Dendritic cell treated with granulocyte-macrophage colony-stimulating factor and Interleukin-4, amounts not matched to agents 40 ng/mL and 50 ng/mL, for 4 days (primary cell): ENCODE measurements at regions of chr10 and their contacts with region 1.

Region 1: GRCh38 chr10:123132576-123133477 is 2.9 kb upstream of the HMX3 start:
- H3K4me3 Mint-ChIP-seq: no peak overlapping the region
- H3K27ac Mint-ChIP-seq: no peak overlapping the region
- H3K4me1 Mint-ChIP-seq: peaks cover 28% of the 10 kb centered on the region
- H3K27me3 Mint-ChIP-seq: peaks cover 90% of the 10 kb centered on the region

Region 2: DNA sequence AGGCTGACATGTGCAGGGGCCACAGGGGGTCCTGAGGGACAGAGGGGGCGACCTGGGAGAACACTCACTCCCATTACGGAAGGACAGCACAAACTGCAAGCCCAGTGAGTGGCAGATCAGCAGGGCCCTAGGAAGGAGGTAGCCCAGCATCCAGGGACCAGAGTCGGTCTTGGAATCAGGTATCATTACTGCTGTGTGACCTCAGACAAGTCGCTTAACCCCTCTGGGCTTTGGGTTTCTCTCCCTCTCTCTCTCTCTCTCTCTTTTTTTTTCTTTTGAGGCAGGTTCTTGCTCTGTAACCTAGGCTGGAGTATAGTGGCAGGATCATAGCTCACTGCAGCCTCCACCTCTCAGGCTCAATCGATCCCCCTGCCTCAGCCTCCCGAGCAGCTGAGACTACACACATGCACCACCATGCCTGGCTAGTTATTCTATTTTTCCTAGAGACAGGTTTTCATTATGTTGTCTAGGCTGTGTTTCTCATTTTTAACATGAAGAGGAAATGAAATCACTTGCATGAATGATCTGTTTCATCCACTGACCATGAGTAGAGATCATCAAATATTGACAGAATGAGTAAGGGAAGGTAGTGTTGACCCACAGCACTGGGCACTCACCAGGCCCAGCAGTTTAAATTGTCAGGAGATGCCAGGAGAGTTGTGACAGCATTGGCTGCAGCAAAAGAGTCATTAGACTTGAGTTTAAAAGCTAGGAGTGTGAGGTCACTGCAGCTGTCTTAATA is 70.7 kb after region 1 on chr10:
- intact Hi-C with region 1: no loop called
- H3K4me3 Mint-ChIP-seq: no peak overlapping the region
- H3K27ac Mint-ChIP-seq: no peak overlapping the region
- H3K4me1 Mint-ChIP-seq: no peaks in the 10 kb centered on the region
- H3K27me3 Mint-ChIP-seq: no peaks in the 10 kb centered on the region

Region 3: DNA sequence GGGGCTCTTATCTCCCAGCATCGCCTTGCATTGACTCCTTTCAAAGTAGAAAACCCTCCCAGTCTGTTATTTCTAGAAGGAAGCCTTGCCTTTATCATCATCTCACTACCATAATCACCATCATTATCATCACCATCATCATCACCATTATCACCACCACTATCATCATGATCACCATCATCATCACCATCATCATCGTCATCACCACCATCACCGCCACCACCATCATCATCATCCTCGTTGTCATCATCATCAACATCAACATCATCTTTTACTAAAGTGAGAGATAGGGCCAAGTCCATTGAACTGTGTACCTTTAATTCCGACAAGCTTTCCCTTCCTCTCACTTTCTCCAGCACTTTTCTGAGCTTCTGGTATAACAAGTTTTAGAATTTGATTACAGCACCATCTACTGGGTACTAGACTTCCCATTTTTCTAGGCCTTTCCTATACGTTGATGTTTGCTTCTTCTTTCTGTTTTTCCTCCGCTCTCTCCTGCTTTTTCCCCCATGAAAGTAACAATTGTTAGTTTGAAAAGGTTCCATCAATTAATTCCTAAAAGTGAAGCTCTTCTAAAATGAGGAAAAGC is 247.8 kb after region 1 on chr10:
- intact Hi-C with region 1: loop called (anchors 2 kb)
- H3K4me3 Mint-ChIP-seq: no peak overlapping the region
- H3K27ac Mint-ChIP-seq: no peak overlapping the region
- H3K4me1 Mint-ChIP-seq: no peaks in the 10 kb centered on the region
- H3K27me3 Mint-ChIP-seq: peaks cover 21% of the 10 kb centered on the region

Region 4: DNA sequence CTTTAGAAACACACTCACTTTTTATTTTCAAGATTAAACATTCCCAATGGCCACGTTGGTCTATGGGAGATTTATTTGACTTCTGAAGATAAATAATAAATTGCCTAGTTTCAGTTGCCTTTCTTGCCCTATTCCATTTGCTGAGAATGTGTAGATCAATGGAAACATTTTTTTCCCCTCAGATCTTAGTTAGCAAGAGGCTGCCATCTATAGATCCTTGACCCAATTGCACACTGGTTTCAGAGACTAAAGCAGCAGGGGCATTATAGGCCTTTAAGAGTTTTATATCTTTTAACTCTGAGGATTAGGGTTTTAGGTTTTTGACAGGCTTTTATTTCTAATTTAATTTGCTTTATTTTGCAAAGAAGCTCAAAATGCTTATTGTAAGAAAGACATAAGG is 370.2 kb after region 1 on chr10:
- intact Hi-C with region 1: loop called (anchors 1 kb)
- H3K4me3 Mint-ChIP-seq: no peak overlapping the region
- H3K27ac Mint-ChIP-seq: no peak overlapping the region
- H3K4me1 Mint-ChIP-seq: no peaks in the 10 kb centered on the region
- H3K27me3 Mint-ChIP-seq: peaks cover 20% of the 10 kb centered on the region

Region 5: GRCh38 chr10:123559066-123559822 is 426.4 kb after region 1 on chr10:
- intact Hi-C with region 1: loop called (anchors 1 kb)
- H3K4me3 Mint-ChIP-seq: no peak overlapping the region
- H3K27ac Mint-ChIP-seq: no peak overlapping the region
- H3K4me1 Mint-ChIP-seq: no peaks in the 10 kb centered on the region
- H3K27me3 Mint-ChIP-seq: peaks cover 21% of the 10 kb centered on the region